Panc1 (cell line): ENCODE measurements at regions of chr1 and their contacts with region 1.

Region 1: DNA sequence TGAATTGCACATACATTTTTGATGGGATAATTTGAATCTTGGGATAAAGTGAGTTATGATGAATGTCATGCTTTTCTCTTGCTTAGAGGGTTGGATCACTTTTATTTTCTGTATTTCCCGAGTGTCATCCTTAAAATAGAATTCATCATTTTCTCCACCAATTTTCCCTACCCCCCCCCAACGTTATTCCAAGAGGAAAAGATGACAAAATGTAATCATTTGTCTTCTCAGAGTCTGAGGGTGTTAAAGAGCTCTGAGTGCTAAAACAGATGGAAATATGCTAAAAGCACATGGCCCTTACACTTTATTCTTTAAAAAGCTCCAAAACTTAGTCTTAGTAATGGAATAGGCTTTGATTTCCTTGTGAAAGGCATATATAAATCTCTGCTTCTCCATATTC is 81.4 kb downstream of the CHRM3 start:
- DNase-seq: no peak
- ATAC-seq: no peak
- H3K4me3 ChIP-seq: no peak overlapping the region
- H3K27ac ChIP-seq: no peak overlapping the region
- H3K4me1 ChIP-seq: no peaks in the 10 kb centered on the region
- H3K27me3 ChIP-seq: no peaks in the 10 kb centered on the region
- CTCF ChIP-seq: no peak

Region 2: GRCh38 chr1:239315631-239316217 is 152.0 kb before region 1 on chr1:
- CTCF ChIA-PET with region 1: no interaction called
- POLR2A ChIA-PET with region 1: no interaction called
- in situ Hi-C with region 1: no loop called
- intact Hi-C with region 1: no loop called
- DNase-seq: no peak
- ATAC-seq: no peak
- H3K4me3 ChIP-seq: peak overlapping the region in 1 of 2 experiments; percentile 13; a peak in 1 of 4 replicates
- H3K27ac ChIP-seq: no peak overlapping the region
- H3K4me1 ChIP-seq: no peaks in the 10 kb centered on the region
- H3K27me3 ChIP-seq: no peaks in the 10 kb centered on the region
- CTCF ChIP-seq: no peak

Region 3: GRCh38 chr1:239426821-239427475 is 40.8 kb before region 1 on chr1:
- CTCF ChIA-PET with region 1: no interaction called
- POLR2A ChIA-PET with region 1: no interaction called
- in situ Hi-C with region 1: no loop called
- intact Hi-C with region 1: no loop called
- DNase-seq: no peak
- ATAC-seq: no peak
- H3K4me3 ChIP-seq: no peak overlapping the region
- H3K27ac ChIP-seq: no peak overlapping the region
- H3K4me1 ChIP-seq: no peaks in the 10 kb centered on the region
- H3K27me3 ChIP-seq: no peaks in the 10 kb centered on the region
- CTCF ChIP-seq: no peak

Region 4: GRCh38 chr1:239478069-239478468 is 10.3 kb after region 1 on chr1:
- CTCF ChIA-PET with region 1: no interaction called
- POLR2A ChIA-PET with region 1: interaction called, 16 read pairs
- in situ Hi-C with region 1: no loop called
- intact Hi-C with region 1: no loop called
- DNase-seq: no peak
- ATAC-seq: no peak
- H3K4me3 ChIP-seq: no peak overlapping the region
- H3K27ac ChIP-seq: no peak overlapping the region
- H3K4me1 ChIP-seq: no peaks in the 10 kb centered on the region
- H3K27me3 ChIP-seq: no peaks in the 10 kb centered on the region
- CTCF ChIP-seq: no peak

Region 5: GRCh38 chr1:240492832-240493440 is 1025.2 kb after region 1 on chr1:
- CTCF ChIA-PET with region 1: no interaction called
- POLR2A ChIA-PET with region 1: no interaction called
- in situ Hi-C with region 1: no loop called
- intact Hi-C with region 1: no loop called
- DNase-seq: no peak
- ATAC-seq: no peak
- H3K4me3 ChIP-seq: no peak overlapping the region
- H3K27ac ChIP-seq: no peak overlapping the region
- H3K4me1 ChIP-seq: no peaks in the 10 kb centered on the region
- H3K27me3 ChIP-seq: no peaks in the 10 kb centered on the region
- CTCF ChIP-seq: no peak